Activated T-helper 1 cell treated with anti-CD3 and anti-CD28 coated beads, Interleukin-12 subunit alpha, Interleukin-12 subunit beta, Interleukin-2, Interleukin-4 antibody, amounts not matched to agents 30 ng/mL and 10 ng/mL and 1 ng/mL, durations not matched to agents 14 hours and 24 hours and 36 hours (primary cell): ENCODE measurements at regions of chr1 and their contacts with region 1.

Region 1: DNA sequence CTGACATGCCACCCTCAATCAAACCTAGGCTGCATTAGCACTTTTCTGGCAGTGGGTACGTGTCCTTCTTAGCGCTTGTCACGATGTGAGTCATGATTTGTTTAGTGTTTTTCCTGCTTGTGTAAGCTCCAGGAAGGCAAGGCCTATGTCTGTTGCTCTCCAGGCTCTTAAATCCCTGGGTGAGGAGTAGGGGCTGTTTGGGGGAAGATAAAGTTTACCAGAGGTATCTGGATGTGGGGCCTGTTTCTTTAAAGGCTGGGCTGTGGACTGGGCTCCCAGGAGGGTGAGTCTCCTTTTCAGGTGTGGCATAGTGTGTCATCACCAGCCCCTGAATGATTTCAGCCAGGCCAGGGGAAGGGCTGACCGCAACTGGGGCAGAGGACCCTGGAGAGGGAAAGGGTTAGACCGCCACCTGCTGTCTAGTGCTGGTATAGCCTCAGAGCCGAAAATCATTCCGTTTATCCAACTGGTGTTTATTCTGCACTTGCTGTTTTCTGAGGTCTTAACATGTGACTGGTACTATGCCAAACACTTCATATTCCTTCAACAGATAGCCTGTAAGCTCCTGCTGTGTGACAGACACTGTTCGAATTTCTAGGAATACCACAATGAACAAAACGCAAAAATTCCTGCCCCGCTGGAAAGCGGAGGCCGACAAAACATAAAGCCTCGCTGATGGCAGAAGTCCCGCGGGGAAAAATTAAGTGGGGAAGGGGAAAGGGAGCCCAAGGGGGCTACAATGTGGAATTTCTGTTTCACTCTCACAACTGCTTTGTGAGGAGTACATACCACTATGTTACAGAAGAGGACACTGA is 9.7 kb downstream of the SERINC2 start:
- DNase-seq: peak; percentile 26
- H3K4me3 Mint-ChIP-seq: no peak overlapping the region
- H3K27ac Mint-ChIP-seq: peak overlapping the region; percentile 34
- H3K4me1 Mint-ChIP-seq: peaks cover 7% of the 10 kb centered on the region
- H3K27me3 Mint-ChIP-seq: peaks cover 20% of the 10 kb centered on the region

Region 2: GRCh38 chr1:31166462-31166861 is 256.2 kb before region 1 on chr1:
- intact Hi-C with region 1: loop called (anchors 1 kb)
- DNase-seq: no peak
- H3K4me3 Mint-ChIP-seq: no peak overlapping the region
- H3K27ac Mint-ChIP-seq: no peak overlapping the region
- H3K4me1 Mint-ChIP-seq: peaks cover 16% of the 10 kb centered on the region
- H3K27me3 Mint-ChIP-seq: peaks cover 1% of the 10 kb centered on the region

Region 3: GRCh38 chr1:31182352-31182751 is 240.4 kb before region 1 on chr1:
- intact Hi-C with region 1: loop called (anchors 1 kb)
- DNase-seq: peak; percentile 37
- H3K4me3 Mint-ChIP-seq: peak overlapping the region; percentile 22
- H3K27ac Mint-ChIP-seq: no peak overlapping the region
- H3K4me1 Mint-ChIP-seq: no peaks in the 10 kb centered on the region
- H3K27me3 Mint-ChIP-seq: peaks cover 22% of the 10 kb centered on the region

Region 4: GRCh38 chr1:31364561-31365255 is 58.0 kb before region 1 on chr1:
- intact Hi-C with region 1: no loop called
- DNase-seq: no peak
- H3K4me3 Mint-ChIP-seq: no peak overlapping the region
- H3K27ac Mint-ChIP-seq: no peak overlapping the region
- H3K4me1 Mint-ChIP-seq: no peaks in the 10 kb centered on the region
- H3K27me3 Mint-ChIP-seq: no peaks in the 10 kb centered on the region

Region 5: GRCh38 chr1:31394628-31395193 is 28.0 kb before region 1 on chr1:
- intact Hi-C with region 1: loop called (anchors 1 kb)
- DNase-seq: peak; percentile 61
- H3K4me3 Mint-ChIP-seq: peak overlapping the region; percentile 80
- H3K27ac Mint-ChIP-seq: no peak overlapping the region
- H3K4me1 Mint-ChIP-seq: peaks cover 10% of the 10 kb centered on the region
- H3K27me3 Mint-ChIP-seq: peaks cover 11% of the 10 kb centered on the region

Region 6: DNA sequence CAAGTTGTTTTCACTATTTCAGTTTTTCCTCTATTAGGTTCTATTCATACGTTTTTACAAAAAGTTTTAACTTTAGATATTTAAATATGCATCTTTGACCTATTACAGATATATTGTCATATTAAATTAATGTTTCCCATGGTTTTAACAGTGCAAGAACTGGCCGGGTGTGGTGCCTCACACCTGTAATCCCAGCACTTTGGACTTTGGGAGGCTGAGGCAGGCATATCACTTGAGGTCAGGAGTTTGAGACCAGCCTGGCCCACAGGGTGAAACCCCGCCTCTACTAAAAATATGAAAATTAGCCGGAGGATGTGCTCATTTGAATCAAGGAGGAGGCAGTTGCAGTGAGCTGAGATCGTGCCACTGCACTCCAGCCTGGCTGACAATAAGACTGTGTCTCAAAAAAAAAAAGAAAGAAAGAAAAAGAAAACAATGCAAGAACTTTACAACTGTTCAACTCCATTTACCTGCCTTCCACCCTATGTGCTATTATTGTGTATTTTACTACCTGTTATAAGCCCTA is 133.8 kb after region 1 on chr1:
- intact Hi-C with region 1: no loop called
- DNase-seq: no peak
- H3K4me3 Mint-ChIP-seq: no peak overlapping the region
- H3K27ac Mint-ChIP-seq: no peak overlapping the region
- H3K4me1 Mint-ChIP-seq: no peaks in the 10 kb centered on the region
- H3K27me3 Mint-ChIP-seq: peaks cover 23% of the 10 kb centered on the region